K562 (cell line): ENCODE measurements at regions of chr1 and their contacts with region 1.

Region 1: GRCh38 chr1:224644553-224645154 is 28.5 kb downstream of the CNIH3 start:
- DNase-seq: peak; percentile 67 to 77 (median 74)
- ATAC-seq: peak; percentile 86
- H3K4me3 ChIP-seq: no peak overlapping the region
- H3K27ac ChIP-seq: no peak overlapping the region
- H3K4me1 ChIP-seq: no peaks in the 10 kb centered on the region
- H3K27me3 ChIP-seq: peaks cover 36 to 72% of the 10 kb centered on the region in 2 experiments
- CTCF ChIP-seq: peak; percentile 84 to 92 (median 90)
- EP300 ChIP-seq: no peak
- POLR2A ChIP-seq: no peak
- RAD21 ChIP-seq: peak; percentile 59 to 80

Region 2: DNA sequence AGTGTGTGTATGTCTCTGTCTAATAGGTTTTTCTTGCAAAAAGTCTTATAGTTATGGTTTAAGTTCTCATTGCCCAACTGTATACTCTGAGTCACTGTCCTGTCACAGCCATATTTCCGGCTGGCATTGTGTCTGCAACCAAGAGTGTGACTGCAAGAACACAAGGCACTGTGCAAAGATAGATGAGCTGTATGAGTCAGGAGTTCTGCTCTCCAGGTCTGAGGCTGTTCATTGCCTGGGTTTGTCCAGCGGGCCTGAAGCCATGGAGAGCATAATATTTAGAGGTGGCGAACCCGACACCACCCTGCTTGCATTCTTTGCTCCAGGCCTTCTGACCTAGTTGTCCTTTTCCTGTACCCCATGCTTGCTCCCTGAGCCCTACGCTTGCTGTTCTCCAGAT is 79.5 kb before region 1 on chr1:
- CTCF ChIA-PET with region 1: no interaction called
- POLR2A ChIA-PET with region 1: no interaction called
- in situ Hi-C with region 1: no loop called
- intact Hi-C with region 1: no loop called
- DNase-seq: peak in 1 of 4 experiments; percentile 29
- ATAC-seq: peak; percentile 61
- H3K4me3 ChIP-seq: no peak overlapping the region
- H3K27ac ChIP-seq: no peak overlapping the region
- H3K4me1 ChIP-seq: no peaks in the 10 kb centered on the region
- H3K27me3 ChIP-seq: no peaks in the 10 kb centered on the region; a peak in 1 of 5 replicates
- CTCF ChIP-seq: no peak
- EP300 ChIP-seq: no peak
- POLR2A ChIP-seq: no peak
- RAD21 ChIP-seq: no peak

Region 3: GRCh38 chr1:224736619-224737352 is 92.1 kb after region 1 on chr1:
- CTCF ChIA-PET with region 1: no interaction called
- POLR2A ChIA-PET with region 1: no interaction called
- in situ Hi-C with region 1: no loop called
- intact Hi-C with region 1: no loop called
- DNase-seq: peak in 3 of 4 experiments; percentile 22 to 43 (median 34)
- ATAC-seq: peak; percentile 48
- H3K4me3 ChIP-seq: no peak overlapping the region
- H3K27ac ChIP-seq: no peak overlapping the region
- H3K4me1 ChIP-seq: no peaks in the 10 kb centered on the region
- H3K27me3 ChIP-seq: peaks cover 23 to 50% of the 10 kb centered on the region in 2 experiments
- CTCF ChIP-seq: no peak
- EP300 ChIP-seq: no peak
- POLR2A ChIP-seq: no peak
- RAD21 ChIP-seq: no peak

Region 4: DNA sequence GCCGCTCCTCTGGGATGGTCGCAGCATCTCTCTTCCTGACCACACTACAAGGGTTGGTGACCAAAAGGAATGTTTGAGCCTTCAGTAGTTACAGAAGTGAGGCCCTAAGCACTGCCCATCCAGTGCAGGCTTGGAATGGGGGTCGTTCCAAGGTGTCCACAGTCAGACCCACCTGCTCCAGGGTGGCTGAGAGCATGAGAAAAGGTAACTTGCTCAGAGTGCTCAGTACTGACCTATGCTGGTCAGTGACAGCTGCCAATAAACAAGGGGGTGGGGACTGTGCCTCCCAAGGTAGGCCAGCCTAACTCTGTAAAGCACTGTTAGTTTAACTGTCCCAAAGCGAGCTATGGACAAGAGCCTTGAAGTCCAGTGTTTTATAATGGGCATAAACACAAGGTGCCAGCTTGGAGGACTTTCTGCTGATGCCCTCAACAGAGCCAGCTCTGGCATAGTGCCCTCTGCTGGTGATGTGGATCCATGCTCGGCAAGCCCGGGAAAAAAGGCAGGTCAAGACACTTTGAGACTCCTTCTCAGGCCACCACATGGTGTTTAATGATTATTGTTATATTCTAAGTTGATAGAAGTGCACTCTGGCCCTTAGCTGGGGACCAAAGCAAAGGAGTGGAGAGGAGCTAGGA is 206.7 kb after region 1 on chr1:
- CTCF ChIA-PET with region 1: no interaction called
- POLR2A ChIA-PET with region 1: no interaction called
- in situ Hi-C with region 1: no loop called
- intact Hi-C with region 1: loop called (anchors 5 kb)
- DNase-seq: peak; percentile 46 to 60 (median 54)
- ATAC-seq: peak; percentile 89
- H3K4me3 ChIP-seq: no peak overlapping the region
- H3K27ac ChIP-seq: no peak overlapping the region
- H3K4me1 ChIP-seq: no peaks in the 10 kb centered on the region
- H3K27me3 ChIP-seq: peaks cover 0 to 7% of the 10 kb centered on the region in 2 experiments; a peak in 1 of 5 replicates
- CTCF ChIP-seq: peak; percentile 73 to 90 (median 76)
- EP300 ChIP-seq: no peak
- POLR2A ChIP-seq: no peak
- RAD21 ChIP-seq: peak; percentile 60 to 67; a peak in 3 of 4 replicates

Region 5: DNA sequence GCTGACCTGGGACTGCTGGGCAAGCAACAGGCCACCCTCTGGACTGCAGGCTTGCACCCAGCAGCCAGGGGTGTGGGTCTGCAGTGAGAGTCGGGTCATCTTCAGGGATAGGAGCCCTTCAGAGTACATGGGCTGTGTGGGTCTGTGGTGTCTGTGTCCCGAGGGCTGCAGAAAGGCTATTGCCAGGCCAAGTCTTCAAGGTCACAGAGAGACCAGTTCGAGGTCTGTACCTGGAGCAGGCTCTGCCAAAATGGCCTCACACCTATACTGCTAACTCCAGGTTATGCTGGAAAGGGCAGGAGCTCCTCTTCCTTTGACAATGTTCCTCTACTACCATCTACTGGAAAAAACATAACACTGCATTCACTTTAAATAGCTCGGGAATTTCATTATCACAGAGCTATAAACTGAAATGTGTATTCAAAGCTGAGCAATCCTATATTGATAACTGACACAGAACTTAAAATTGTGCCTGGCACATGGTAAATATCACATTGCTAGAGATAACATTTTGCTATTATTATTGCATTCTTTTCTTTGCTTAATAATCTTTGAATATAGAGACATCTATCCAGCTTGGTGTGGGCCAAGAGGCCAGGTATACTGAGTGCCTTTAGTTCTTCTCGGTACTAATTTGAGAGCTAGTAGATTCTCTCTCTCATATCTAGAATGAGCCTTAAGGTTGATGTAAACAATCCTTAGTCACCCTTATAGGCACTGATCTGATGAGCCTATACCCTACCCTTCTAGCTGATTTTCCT is 277.9 kb after region 1 on chr1:
- CTCF ChIA-PET with region 1: interaction called, 3 read pairs
- POLR2A ChIA-PET with region 1: no interaction called
- in situ Hi-C with region 1: no loop called
- intact Hi-C with region 1: loop called (anchors 1 kb)
- DNase-seq: peak; percentile 51 to 64 (median 56)
- ATAC-seq: peak; percentile 92
- H3K4me3 ChIP-seq: no peak overlapping the region
- H3K27ac ChIP-seq: no peak overlapping the region
- H3K4me1 ChIP-seq: no peaks in the 10 kb centered on the region
- H3K27me3 ChIP-seq: peaks cover 10 to 16% of the 10 kb centered on the region in 2 experiments
- CTCF ChIP-seq: peak; percentile 63 to 90 (median 76)
- EP300 ChIP-seq: no peak
- POLR2A ChIP-seq: no peak
- RAD21 ChIP-seq: peak; percentile 82 to 89